CD4-positive, alpha-beta T cell (primary cell): ENCODE measurements at regions of chr19 and their contacts with region 1.

Region 1: GRCh38 chr19:1189419-1189818 is 15.4 kb upstream of the SBNO2 start:
- DNase-seq: peak in 13 of 14 experiments; percentile 31 to 79 (median 50)
- ATAC-seq: peak; percentile 46
- H3K4me3 ChIP-seq: no peak overlapping the region
- H3K4me3 Mint-ChIP-seq: peak overlapping the region; percentile 64
- H3K27ac ChIP-seq: no peak overlapping the region
- H3K27ac Mint-ChIP-seq: peak overlapping the region; percentile 72
- H3K4me1 ChIP-seq: peaks cover 50% of the 10 kb centered on the region
- H3K4me1 Mint-ChIP-seq: peaks cover 22% of the 10 kb centered on the region
- H3K27me3 ChIP-seq: no peaks in the 10 kb centered on the region
- H3K27me3 Mint-ChIP-seq: no peaks in the 10 kb centered on the region
- CTCF ChIP-seq: no peak

Region 2: DNA sequence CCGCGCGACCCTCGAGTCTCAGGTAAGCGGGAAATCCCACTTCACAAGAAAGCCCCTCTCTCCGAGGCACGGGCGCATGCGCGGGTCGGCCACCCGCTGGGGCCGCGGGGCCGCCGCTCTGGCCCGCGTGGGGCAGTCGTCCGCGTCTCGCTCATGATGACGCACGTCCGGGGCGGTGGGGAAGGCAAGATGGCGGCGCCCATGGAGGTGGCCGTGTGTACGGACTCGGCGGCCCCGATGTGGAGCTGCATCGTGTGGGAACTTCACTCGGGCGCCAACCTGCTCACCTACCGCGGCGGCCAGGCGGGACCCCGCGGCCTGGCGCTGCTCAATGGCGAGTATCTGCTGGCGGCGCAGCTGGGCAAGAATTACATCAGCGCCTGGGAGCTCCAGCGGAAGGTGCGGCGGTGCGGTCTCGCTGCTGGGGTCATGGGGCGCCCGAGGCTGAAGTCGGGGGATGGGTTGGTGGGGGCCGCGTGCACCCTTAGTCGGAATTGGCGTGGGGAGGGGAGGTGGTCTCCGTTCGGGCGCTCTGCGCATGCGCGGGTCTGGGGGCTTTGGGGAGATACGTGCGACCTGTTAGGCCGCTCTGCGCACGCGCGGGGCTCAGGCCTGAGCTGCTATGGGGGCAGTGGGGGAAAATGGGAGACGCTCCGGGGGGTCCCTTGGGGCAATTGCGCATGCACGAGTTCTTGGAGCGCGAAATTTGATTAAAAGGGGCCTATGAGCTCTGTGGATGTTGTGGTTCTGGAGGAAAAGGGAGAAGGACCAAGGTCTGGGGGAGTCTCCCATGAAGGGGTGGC is 205.1 kb before region 1 on chr19 and contains the start of gene WDR18:
- CTCF ChIA-PET with region 1: interaction called, 3 read pairs
- POLR2A ChIA-PET with region 1: no interaction called
- intact Hi-C with region 1: loop called in 1 of 2 experiments (anchors 5 kb)
- DNase-seq: peak; percentile 71 to 94 (median 84)
- ATAC-seq: peak; percentile 90
- H3K4me3 ChIP-seq: peak within 1 kb of the TSS; percentile 96
- H3K4me3 Mint-ChIP-seq: peak within 1 kb of the TSS; percentile 94
- H3K27ac ChIP-seq: peak within 1 kb of the TSS; percentile 72 to 75
- H3K27ac Mint-ChIP-seq: peak within 1 kb of the TSS; percentile 78
- H3K4me1 ChIP-seq: peaks cover 34% of the 10 kb centered on the region
- H3K4me1 Mint-ChIP-seq: peaks cover 15% of the 10 kb centered on the region
- H3K27me3 ChIP-seq: no peaks in the 10 kb centered on the region
- H3K27me3 Mint-ChIP-seq: no peaks in the 10 kb centered on the region
- CTCF ChIP-seq: no peak
- total RNA-seq, gene WDR18: 16.8 to 17.1 TPM

Region 3: DNA sequence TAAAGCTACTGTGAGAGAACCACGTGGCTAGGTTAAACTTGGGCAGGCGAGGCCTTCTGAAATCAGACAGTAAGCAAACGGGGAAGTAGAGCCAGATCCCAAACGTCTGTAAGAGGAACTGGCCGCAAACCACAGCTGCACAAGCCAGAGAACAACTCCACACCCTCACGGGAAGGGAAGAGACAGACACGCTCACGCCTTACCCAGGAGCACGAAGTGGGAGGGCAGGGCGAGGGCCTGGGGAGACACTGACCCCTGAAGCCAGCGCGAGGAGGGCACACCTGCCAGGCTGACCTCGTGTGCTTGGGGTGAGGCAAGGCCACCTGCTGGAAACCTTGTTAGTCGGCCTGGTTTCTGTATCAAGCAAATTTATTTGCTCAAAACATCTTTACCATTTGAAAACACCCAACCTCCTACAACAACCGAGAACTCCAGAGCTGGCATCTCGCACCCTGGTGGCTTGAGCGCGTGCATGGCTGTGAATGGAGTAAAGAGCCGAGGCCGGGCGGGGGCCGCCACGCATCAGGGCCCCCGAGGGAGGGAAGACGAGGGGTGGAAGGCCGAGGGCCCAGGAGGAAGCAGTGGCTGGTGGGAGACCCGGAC is 101.5 kb before region 1 on chr19:
- CTCF ChIA-PET with region 1: no interaction called
- POLR2A ChIA-PET with region 1: interaction called, 15 read pairs
- intact Hi-C with region 1: no loop called
- DNase-seq: peak in 10 of 14 experiments; percentile 44 to 87 (median 63)
- ATAC-seq: peak; percentile 58
- H3K4me3 ChIP-seq: no peak overlapping the region
- H3K4me3 Mint-ChIP-seq: peak overlapping the region; percentile 71
- H3K27ac ChIP-seq: peak overlapping the region; percentile 59 to 68
- H3K27ac Mint-ChIP-seq: peak overlapping the region; percentile 82
- H3K4me1 ChIP-seq: peaks cover 77% of the 10 kb centered on the region
- H3K4me1 Mint-ChIP-seq: peaks cover 27% of the 10 kb centered on the region
- H3K27me3 ChIP-seq: no peaks in the 10 kb centered on the region
- H3K27me3 Mint-ChIP-seq: no peaks in the 10 kb centered on the region
- CTCF ChIP-seq: peak; percentile 5

Region 4: GRCh38 chr19:1113033-1113985 is 76.1 kb before region 1 on chr19:
- CTCF ChIA-PET with region 1: interaction called, 48 read pairs
- POLR2A ChIA-PET with region 1: interaction called, 13 read pairs
- intact Hi-C with region 1: loop called (anchors 5 kb)
- DNase-seq: peak; percentile 73 to 94 (median 80)
- ATAC-seq: peak; percentile 87
- H3K4me3 ChIP-seq: no peak overlapping the region
- H3K4me3 Mint-ChIP-seq: no peak overlapping the region
- H3K27ac ChIP-seq: peak overlapping the region; percentile 21 to 22
- H3K27ac Mint-ChIP-seq: peak overlapping the region; percentile 30
- H3K4me1 ChIP-seq: peaks cover 16% of the 10 kb centered on the region
- H3K4me1 Mint-ChIP-seq: no peaks in the 10 kb centered on the region
- H3K27me3 ChIP-seq: no peaks in the 10 kb centered on the region
- H3K27me3 Mint-ChIP-seq: no peaks in the 10 kb centered on the region
- CTCF ChIP-seq: peak; percentile 85

Region 5: GRCh38 chr19:1241417-1242095 is 52.1 kb after region 1 on chr19 and contains the start of gene ATP5F1D:
- CTCF ChIA-PET with region 1: interaction called, 5 read pairs
- POLR2A ChIA-PET with region 1: interaction called, 3 read pairs
- intact Hi-C with region 1: loop called in 1 of 2 experiments (anchors 5 kb)
- DNase-seq: peak; percentile 82 to 96 (median 92)
- ATAC-seq: peak; percentile 63
- H3K4me3 ChIP-seq: peak within 1 kb of the TSS; percentile 53
- H3K4me3 Mint-ChIP-seq: peak within 1 kb of the TSS; percentile 91
- H3K27ac ChIP-seq: peak within 1 kb of the TSS in 1 of 2 donors; percentile 25
- H3K27ac Mint-ChIP-seq: peak within 1 kb of the TSS; percentile 89
- H3K4me1 ChIP-seq: peaks cover 78% of the 10 kb centered on the region
- H3K4me1 Mint-ChIP-seq: peaks cover 31% of the 10 kb centered on the region
- H3K27me3 ChIP-seq: peaks cover 6% of the 10 kb centered on the region in 2 experiments
- H3K27me3 Mint-ChIP-seq: peaks cover 13% of the 10 kb centered on the region
- CTCF ChIP-seq: no peak
- total RNA-seq, gene ATP5F1D: 77.6 to 92.6 TPM

Region 6: DNA sequence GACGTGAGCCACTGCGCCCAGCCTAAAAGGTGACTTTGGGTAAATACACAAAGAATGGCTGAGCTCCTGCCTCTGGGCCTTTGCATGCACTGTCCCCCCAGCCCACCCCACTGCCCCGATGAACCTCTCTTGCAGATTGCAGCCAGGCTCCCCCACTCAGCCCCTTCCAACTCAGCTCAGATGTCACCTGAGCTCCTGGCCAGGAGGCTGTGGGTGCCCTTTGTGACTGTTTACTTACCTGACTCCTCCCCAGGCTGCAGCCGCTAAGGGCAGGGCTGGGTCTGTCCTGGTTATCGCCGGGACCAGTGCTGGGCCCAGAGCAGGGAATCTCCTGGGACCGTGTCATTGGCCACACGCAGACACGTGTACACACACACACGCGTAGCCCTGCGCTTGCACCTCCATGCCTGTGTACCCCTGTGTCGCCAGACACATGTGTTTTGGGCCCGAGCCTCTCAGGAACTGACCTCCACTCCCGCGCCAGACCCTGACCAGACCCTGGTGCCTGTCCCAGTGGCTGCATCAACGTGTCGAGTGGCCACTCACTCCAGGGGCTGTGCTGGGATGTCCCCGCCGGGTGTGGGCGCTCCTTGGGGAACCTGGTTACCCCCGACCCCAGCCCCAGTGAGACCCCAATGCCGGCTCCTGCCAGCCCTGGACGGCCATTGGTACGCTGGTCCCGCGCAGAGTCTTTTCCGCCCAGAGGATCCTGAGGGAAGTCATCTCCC is 114.9 kb after region 1 on chr19:
- CTCF ChIA-PET with region 1: no interaction called
- POLR2A ChIA-PET with region 1: no interaction called
- intact Hi-C with region 1: no loop called
- DNase-seq: no peak
- ATAC-seq: no peak
- H3K4me3 ChIP-seq: no peak overlapping the region
- H3K4me3 Mint-ChIP-seq: no peak overlapping the region
- H3K27ac ChIP-seq: no peak overlapping the region
- H3K27ac Mint-ChIP-seq: no peak overlapping the region
- H3K4me1 ChIP-seq: no peaks in the 10 kb centered on the region
- H3K4me1 Mint-ChIP-seq: no peaks in the 10 kb centered on the region
- H3K27me3 ChIP-seq: no peaks in the 10 kb centered on the region
- H3K27me3 Mint-ChIP-seq: no peaks in the 10 kb centered on the region
- CTCF ChIP-seq: no peak